ENCODE measurements at regions of chr1 and their contacts with region 1.

Region 1: GRCh38 chr1:229227298-229227919 is 43.5 kb upstream of the RAB4A start:
- DNase-seq: peak; percentile 66
- H3K4me3 ChIP-seq: no peak overlapping the region
- H3K27ac ChIP-seq: no peak overlapping the region
- H3K4me1 ChIP-seq: no peaks in the 10 kb centered on the region
- CTCF ChIP-seq: peak; percentile 97

Region 2: DNA sequence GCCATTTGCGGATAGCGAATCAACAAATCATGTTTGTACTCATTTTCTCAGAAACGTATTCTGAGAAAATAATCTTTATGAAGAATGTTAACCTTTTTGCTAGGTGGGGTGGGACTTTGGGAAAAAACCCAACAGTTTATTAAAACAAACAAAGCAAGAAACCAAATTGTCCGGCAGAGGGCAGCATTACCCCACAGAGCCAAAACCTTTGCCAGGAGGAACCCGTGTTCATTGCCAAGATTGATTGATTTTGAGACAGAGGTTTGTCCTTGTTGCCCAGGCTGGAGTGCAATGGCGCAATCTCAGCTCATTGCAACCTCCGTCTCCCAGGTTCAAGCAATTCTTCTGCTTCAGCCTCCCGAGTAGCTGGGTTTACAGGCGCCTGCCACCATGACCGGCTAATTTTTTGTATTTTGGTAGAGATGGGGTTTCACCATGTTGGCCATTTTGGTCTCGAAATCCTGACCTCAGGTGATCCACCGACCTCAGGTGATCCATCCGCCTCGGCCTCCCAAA is 563.0 kb before region 1 on chr1:
- CTCF ChIA-PET with region 1: no interaction called
- POLR2A ChIA-PET with region 1: no interaction called
- intact Hi-C with region 1: loop called (anchors 1 kb)
- DNase-seq: peak; percentile 65
- H3K4me3 ChIP-seq: no peak overlapping the region
- H3K27ac ChIP-seq: no peak overlapping the region
- H3K4me1 ChIP-seq: no peaks in the 10 kb centered on the region
- CTCF ChIP-seq: peak; percentile 86

Region 3: DNA sequence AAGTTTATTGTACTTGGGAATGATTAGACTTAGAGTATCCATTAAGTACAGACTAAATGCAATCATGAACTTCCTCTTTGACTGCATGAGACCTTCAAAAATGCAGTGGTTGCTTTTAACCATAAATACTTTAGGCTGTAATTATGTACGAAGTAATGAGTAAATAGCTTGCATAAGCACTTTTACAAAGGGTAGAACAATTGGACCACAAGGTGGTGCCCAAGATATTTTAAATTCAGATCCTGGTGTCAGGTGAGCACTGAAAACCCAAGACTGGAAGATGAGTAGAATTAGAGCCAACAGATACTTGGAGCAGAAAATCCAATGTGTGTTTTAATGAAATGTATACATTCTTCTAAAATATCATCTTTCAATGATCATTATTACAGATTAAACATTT is 535.5 kb before region 1 on chr1:
- CTCF ChIA-PET with region 1: no interaction called
- POLR2A ChIA-PET with region 1: no interaction called
- intact Hi-C with region 1: loop called (anchors 10 kb)
- DNase-seq: peak; percentile 38
- H3K4me3 ChIP-seq: no peak overlapping the region
- H3K27ac ChIP-seq: no peak overlapping the region
- H3K4me1 ChIP-seq: no peaks in the 10 kb centered on the region
- CTCF ChIP-seq: peak; percentile 74

Region 4: GRCh38 chr1:229213797-229214196 is 13.6 kb before region 1 on chr1:
- CTCF ChIA-PET with region 1: no interaction called
- POLR2A ChIA-PET with region 1: no interaction called
- intact Hi-C with region 1: no loop called
- DNase-seq: no peak
- H3K4me3 ChIP-seq: no peak overlapping the region
- H3K27ac ChIP-seq: no peak overlapping the region
- H3K4me1 ChIP-seq: no peaks in the 10 kb centered on the region
- CTCF ChIP-seq: no peak

Region 5: GRCh38 chr1:229547542-229547941 is 320.1 kb after region 1 on chr1:
- CTCF ChIA-PET with region 1: no interaction called
- POLR2A ChIA-PET with region 1: no interaction called
- intact Hi-C with region 1: no loop called
- DNase-seq: no peak
- H3K4me3 ChIP-seq: no peak overlapping the region
- H3K27ac ChIP-seq: no peak overlapping the region
- H3K4me1 ChIP-seq: no peaks in the 10 kb centered on the region
- CTCF ChIP-seq: no peak